Panc1 (cell line): ENCODE measurements at regions of chr2 and their contacts with region 1.

Region 1: DNA sequence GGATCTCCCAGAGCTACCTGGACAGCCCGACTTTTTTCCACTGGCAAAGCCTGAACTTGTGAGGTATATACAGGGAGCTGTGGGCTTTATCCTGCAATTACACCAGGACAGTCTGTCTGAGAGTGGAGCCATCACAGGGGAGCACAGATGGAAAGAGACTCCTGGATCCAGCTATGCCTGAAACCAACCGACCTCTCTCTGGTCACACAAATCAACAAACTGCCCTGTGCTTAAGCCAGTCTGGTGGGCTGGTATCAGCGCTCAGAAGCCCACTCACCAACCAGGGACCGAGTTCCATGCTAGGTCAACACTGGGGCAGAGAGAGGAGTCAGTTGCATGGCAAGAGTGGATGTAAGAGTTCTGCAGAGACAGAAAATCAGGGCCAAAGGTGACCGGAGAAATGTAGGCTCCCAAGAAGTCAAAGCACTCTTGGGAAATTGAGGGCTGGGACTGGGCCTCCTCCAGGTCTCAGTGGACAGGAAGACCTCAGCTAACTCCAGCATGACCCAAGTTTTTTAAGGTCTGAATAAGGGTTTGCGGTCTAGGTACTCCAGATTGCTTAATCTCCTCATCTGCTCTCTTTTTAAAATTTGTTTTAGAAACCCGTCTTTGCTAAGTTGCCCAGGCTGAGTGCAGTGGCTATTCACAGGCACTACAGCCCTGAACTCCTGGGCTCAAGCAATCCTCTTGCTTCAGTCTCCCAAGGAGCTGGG is 3.8 kb upstream of the BOK start:
- DNase-seq: no peak
- ATAC-seq: no peak
- H3K4me3 ChIP-seq: no peak overlapping the region
- H3K27ac ChIP-seq: no peak overlapping the region
- H3K4me1 ChIP-seq: peaks cover 13% of the 10 kb centered on the region
- H3K27me3 ChIP-seq: no peaks in the 10 kb centered on the region
- CTCF ChIP-seq: no peak

Region 2: GRCh38 chr2:241355983-241356870 is 198.5 kb before region 1 on chr2 and contains the start of gene FARP2:
- CTCF ChIA-PET with region 1: no interaction called
- POLR2A ChIA-PET with region 1: interaction called, 12 read pairs
- in situ Hi-C with region 1: no loop called
- intact Hi-C with region 1: no loop called
- DNase-seq: peak; percentile 88
- ATAC-seq: peak; percentile 90
- H3K4me3 ChIP-seq: peak within 1 kb of the TSS; percentile 65 to 84
- H3K27ac ChIP-seq: peak within 1 kb of the TSS; percentile 85
- H3K4me1 ChIP-seq: peaks cover 34% of the 10 kb centered on the region
- H3K27me3 ChIP-seq: no peaks in the 10 kb centered on the region
- CTCF ChIP-seq: no peak
- total RNA-seq, gene FARP2: 80.3 TPM

Region 3: DNA sequence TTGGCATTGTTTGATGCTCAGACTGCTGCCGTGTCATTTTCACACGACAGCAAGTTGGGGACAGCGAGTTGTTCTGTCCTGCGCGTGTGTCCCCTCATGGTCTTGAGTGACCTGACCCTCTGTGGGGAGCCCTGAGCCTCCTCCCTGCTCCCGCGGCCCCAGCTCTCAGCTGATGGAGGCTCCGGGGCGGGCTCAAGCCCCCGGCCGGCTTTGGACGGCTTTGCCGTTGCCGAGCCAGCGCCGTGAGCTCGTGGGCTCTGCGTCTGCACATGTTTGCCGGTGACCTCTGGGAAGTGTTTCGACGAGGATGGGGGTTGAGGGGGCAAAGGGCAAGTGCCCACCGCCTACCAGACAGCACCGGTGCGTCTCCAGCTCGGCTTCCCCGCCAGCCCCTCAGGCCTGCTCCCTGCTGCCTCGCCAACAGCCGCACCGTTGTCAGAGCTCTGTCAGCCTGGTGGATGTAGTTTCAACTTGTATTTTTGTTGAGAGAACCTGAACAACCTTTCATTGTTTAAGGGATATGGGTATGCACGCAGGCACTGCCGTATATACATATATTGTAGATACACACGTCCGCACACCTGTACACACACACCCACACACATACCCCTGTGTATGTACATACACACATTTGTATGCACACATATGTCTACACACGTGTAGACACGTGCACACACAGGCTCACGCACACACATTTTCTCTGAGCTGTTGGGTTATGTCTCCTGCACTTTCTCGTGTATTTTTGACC is 290.2 kb after region 1 on chr2:
- CTCF ChIA-PET with region 1: no interaction called
- POLR2A ChIA-PET with region 1: interaction called, 13 read pairs
- in situ Hi-C with region 1: no loop called
- intact Hi-C with region 1: no loop called
- DNase-seq: no peak
- ATAC-seq: no peak
- H3K4me3 ChIP-seq: peak overlapping the region in 1 of 2 experiments; percentile 57; a peak in 3 of 4 replicates
- H3K27ac ChIP-seq: no peak overlapping the region
- H3K4me1 ChIP-seq: peaks cover 5% of the 10 kb centered on the region; the same call in 1 of the 2 replicates
- H3K27me3 ChIP-seq: no peaks in the 10 kb centered on the region
- CTCF ChIP-seq: no peak